CD4-positive, alpha-beta memory T cell (primary cell): ENCODE measurements at regions of chr10 and their contacts with region 1.

Region 1: GRCh38 chr10:103648921-103649532 is 155.5 kb downstream of the NEURL1 start:
- DNase-seq: no peak
- H3K4me3 ChIP-seq: no peak overlapping the region
- H3K4me3 Mint-ChIP-seq: no peak overlapping the region
- H3K27ac ChIP-seq: no peak overlapping the region
- H3K27ac Mint-ChIP-seq: no peak overlapping the region
- H3K4me1 ChIP-seq: no peaks in the 10 kb centered on the region
- H3K4me1 Mint-ChIP-seq: peaks cover 0 to 18% (median under 1%) of the 10 kb centered on the region in 4 donors
- H3K27me3 ChIP-seq: no peaks in the 10 kb centered on the region
- H3K27me3 Mint-ChIP-seq: no peaks in the 10 kb centered on the region

Region 2: GRCh38 chr10:103620352-103620740 is 28.7 kb before region 1 on chr10:
- CTCF ChIA-PET with region 1: no interaction called
- POLR2A ChIA-PET with region 1: no interaction called
- intact Hi-C with region 1: loop called (anchors 1 kb)
- DNase-seq: no peak
- H3K4me3 ChIP-seq: no peak overlapping the region
- H3K4me3 Mint-ChIP-seq: no peak overlapping the region
- H3K27ac ChIP-seq: no peak overlapping the region
- H3K27ac Mint-ChIP-seq: no peak overlapping the region
- H3K4me1 ChIP-seq: no peaks in the 10 kb centered on the region
- H3K4me1 Mint-ChIP-seq: no peaks in the 10 kb centered on the region
- H3K27me3 ChIP-seq: no peaks in the 10 kb centered on the region
- H3K27me3 Mint-ChIP-seq: no peaks in the 10 kb centered on the region